Calu3 (cell line): ENCODE measurements at regions of chrX and their contacts with region 1.

Region 1: DNA sequence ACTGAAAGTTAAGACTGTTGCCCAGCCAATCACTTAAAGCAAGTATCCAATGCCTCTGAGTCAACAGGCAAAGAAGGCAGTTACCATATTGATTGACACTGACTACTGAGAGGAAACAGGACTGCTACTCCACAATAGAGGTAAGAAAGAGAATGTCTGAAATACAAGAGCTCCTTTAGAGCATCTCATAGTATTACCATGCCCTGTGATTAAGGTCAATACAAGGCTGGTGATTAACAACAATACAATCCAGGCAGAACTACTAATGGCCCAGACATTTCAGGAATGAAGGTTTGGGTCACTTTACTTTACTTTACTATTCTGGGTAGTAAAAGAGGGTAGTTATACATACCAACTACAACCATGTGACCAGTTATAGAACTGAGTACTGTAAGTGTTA is 44.5 kb downstream of the BRWD3 start:
- DNase-seq: peak; percentile 7
- H3K4me3 Mint-ChIP-seq: no peak overlapping the region
- H3K27ac Mint-ChIP-seq: peak overlapping the region; percentile 42
- H3K4me1 Mint-ChIP-seq: peaks cover 25% of the 10 kb centered on the region
- H3K27me3 Mint-ChIP-seq: no peaks in the 10 kb centered on the region
- CTCF ChIP-seq: no peak

Region 2: DNA sequence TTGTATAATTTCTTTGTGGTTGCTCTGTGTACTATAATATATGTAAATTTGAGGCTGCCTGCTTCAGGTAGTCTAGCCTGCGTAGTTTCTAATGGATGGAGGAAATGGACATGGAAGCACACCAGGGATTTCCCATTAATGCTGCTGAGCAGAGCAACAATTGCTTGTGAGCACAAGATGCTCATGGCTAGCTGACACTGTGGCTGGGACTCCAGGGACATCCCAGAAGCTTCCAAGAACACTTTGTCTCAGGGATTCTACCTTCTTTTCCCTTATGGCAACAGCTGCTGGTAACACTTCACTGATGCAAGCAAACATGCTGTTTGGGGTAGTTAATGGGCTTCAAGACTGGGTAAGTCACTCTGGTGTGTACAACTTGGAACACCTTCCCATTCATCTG is 278.9 kb before region 1 on chrX:
- CTCF ChIA-PET with region 1: no interaction called
- intact Hi-C with region 1: no loop called
- DNase-seq: no peak
- H3K4me3 Mint-ChIP-seq: no peak overlapping the region
- H3K27ac Mint-ChIP-seq: no peak overlapping the region
- H3K4me1 Mint-ChIP-seq: no peaks in the 10 kb centered on the region
- H3K27me3 Mint-ChIP-seq: no peaks in the 10 kb centered on the region
- CTCF ChIP-seq: no peak

Region 3: GRCh38 chrX:80808160-80808735 is 43.1 kb after region 1 on chrX:
- CTCF ChIA-PET with region 1: no interaction called
- intact Hi-C with region 1: loop called (anchors 5 kb)
- DNase-seq: peak; percentile 67
- H3K4me3 Mint-ChIP-seq: peak overlapping the region; percentile 89
- H3K27ac Mint-ChIP-seq: peak overlapping the region; percentile 99
- H3K4me1 Mint-ChIP-seq: no peaks in the 10 kb centered on the region
- H3K27me3 Mint-ChIP-seq: no peaks in the 10 kb centered on the region
- CTCF ChIP-seq: no peak